ENCODE measurements at regions of chr2 and their contacts with region 1.

Region 1: GRCh38 chr2:164134336-164134735 is 398.5 kb upstream of the FIGN start:
- DNase-seq: no peak
- H3K4me3 Mint-ChIP-seq: no peak overlapping the region
- H3K27ac Mint-ChIP-seq: no peak overlapping the region
- H3K4me1 Mint-ChIP-seq: no peaks in the 10 kb centered on the region
- H3K27me3 Mint-ChIP-seq: no peaks in the 10 kb centered on the region
- CTCF ChIP-seq: no peak

Region 2: DNA sequence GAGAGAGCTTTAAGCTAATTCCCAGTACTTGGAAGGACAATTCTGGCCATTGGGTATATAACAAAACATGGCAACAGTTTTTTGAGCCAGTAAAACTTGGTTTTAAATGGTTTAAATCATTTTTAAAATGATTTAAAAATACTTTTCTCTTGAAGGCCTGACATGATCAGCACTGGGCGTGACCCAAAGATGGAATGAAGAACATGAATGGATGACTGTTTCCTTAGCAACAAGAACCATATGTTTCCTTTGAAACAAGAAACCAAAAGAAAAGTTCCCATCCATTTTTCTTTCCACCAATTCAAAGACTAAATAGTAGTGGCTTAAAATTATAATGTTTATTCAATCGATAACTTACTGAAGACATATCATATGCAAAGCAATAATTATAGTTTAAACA is 50.3 kb before region 1 on chr2:
- CTCF ChIA-PET with region 1: no interaction called
- intact Hi-C with region 1: loop called (anchors 5 kb)
- DNase-seq: no peak
- H3K4me3 Mint-ChIP-seq: no peak overlapping the region
- H3K27ac Mint-ChIP-seq: no peak overlapping the region
- H3K4me1 Mint-ChIP-seq: no peaks in the 10 kb centered on the region
- H3K27me3 Mint-ChIP-seq: no peaks in the 10 kb centered on the region
- CTCF ChIP-seq: no peak